Panc1 (cell line): ENCODE measurements at regions of chr11 and their contacts with region 1.

Region 1: GRCh38 chr11:78798660-78799059 is 224.0 kb upstream of the NARS2 start:
- DNase-seq: peak; percentile 30
- ATAC-seq: peak; percentile 81
- H3K4me3 ChIP-seq: no peak overlapping the region
- H3K27ac ChIP-seq: no peak overlapping the region
- H3K4me1 ChIP-seq: peaks cover 2% of the 10 kb centered on the region; the same call in 1 of the 2 replicates
- H3K27me3 ChIP-seq: no peaks in the 10 kb centered on the region
- CTCF ChIP-seq: peak; percentile 91

Region 2: DNA sequence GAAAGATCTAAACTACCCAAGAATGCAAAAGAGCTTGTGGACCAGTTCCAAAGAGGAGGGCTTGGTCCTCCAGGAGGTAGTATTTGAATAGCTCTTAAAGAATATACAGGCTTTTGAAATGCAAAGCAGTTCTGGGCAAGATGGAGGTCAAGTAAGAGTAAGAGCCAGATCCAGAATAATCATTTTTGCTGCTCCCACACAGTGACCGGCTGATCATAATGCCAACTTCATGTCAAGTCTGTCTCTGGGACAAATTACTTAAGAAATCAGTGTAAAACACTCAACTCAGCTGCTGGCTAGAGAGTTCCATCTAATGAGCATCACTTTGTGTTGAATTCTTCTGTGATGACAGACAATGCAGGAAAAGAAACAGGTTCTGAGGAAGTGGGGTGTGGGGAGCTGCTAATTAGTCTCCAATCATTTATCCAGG is 26.9 kb after region 1 on chr11:
- CTCF ChIA-PET with region 1: no interaction called
- POLR2A ChIA-PET with region 1: interaction called, 13 read pairs
- in situ Hi-C with region 1: no loop called
- intact Hi-C with region 1: no loop called
- DNase-seq: no peak
- ATAC-seq: no peak
- H3K4me3 ChIP-seq: no peak overlapping the region
- H3K27ac ChIP-seq: no peak overlapping the region
- H3K4me1 ChIP-seq: no peaks in the 10 kb centered on the region
- H3K27me3 ChIP-seq: no peaks in the 10 kb centered on the region
- CTCF ChIP-seq: no peak

Region 3: GRCh38 chr11:78851878-78852586 is 53.4 kb after region 1 on chr11:
- CTCF ChIA-PET with region 1: no interaction called
- POLR2A ChIA-PET with region 1: no interaction called
- in situ Hi-C with region 1: no loop called
- intact Hi-C with region 1: no loop called
- DNase-seq: no peak
- ATAC-seq: no peak
- H3K4me3 ChIP-seq: no peak overlapping the region
- H3K27ac ChIP-seq: no peak overlapping the region
- H3K4me1 ChIP-seq: no peaks in the 10 kb centered on the region
- H3K27me3 ChIP-seq: peaks cover 2% of the 10 kb centered on the region
- CTCF ChIP-seq: no peak

Region 4: DNA sequence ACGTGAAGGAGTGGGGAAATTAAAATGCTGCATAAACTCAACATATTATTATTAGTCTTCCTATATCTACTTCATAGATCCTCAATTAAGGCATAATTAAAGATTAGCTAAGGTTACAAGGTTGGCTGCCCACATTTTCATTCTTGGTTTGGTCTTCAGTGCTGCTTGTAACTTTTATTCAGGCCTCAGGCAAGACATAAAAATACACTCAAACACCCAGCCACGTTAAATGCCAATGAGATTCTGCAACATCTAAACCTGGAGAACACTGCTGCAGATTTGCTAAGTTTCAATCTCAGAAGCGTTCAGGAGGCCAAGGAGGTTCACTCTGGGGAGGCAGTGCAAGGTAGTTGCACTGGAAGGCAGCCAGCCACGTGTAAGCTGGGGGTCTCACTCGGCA is 134.7 kb after region 1 on chr11:
- CTCF ChIA-PET with region 1: no interaction called
- POLR2A ChIA-PET with region 1: interaction called, 11 read pairs
- in situ Hi-C with region 1: no loop called
- intact Hi-C with region 1: no loop called
- DNase-seq: no peak
- ATAC-seq: no peak
- H3K4me3 ChIP-seq: no peak overlapping the region
- H3K27ac ChIP-seq: no peak overlapping the region
- H3K4me1 ChIP-seq: no peaks in the 10 kb centered on the region
- H3K27me3 ChIP-seq: peaks cover 5% of the 10 kb centered on the region; the same call in 1 of the 2 replicates
- CTCF ChIP-seq: no peak

Region 5: GRCh38 chr11:78961247-78961646 is 162.6 kb after region 1 on chr11:
- CTCF ChIA-PET with region 1: interaction called, 3 read pairs
- POLR2A ChIA-PET with region 1: no interaction called
- in situ Hi-C with region 1: no loop called
- intact Hi-C with region 1: loop called (anchors 2 kb)
- DNase-seq: no peak
- ATAC-seq: peak; percentile 85
- H3K4me3 ChIP-seq: no peak overlapping the region; a peak in 1 of 4 replicates
- H3K27ac ChIP-seq: no peak overlapping the region
- H3K4me1 ChIP-seq: no peaks in the 10 kb centered on the region
- H3K27me3 ChIP-seq: no peaks in the 10 kb centered on the region
- CTCF ChIP-seq: peak; percentile 77

Region 6: DNA sequence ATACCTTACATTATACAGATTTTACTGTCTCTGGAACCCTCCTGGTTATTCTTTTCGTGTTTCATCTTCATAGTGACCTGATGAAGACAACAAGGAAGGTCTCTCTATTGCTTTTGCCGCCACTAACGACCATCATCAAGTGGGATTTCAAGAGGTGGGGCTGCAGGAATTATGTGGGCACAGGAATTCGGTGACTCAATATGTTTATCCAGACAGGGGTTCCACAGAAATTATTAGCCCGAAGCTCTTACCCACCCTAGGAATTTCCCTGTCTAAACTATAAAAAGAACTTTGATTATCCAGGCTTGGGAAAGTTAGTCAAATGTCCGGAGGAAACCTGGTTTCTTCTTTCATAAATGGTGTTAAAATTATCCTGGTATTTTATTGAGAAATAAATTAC is 1209.0 kb after region 1 on chr11:
- CTCF ChIA-PET with region 1: no interaction called
- POLR2A ChIA-PET with region 1: no interaction called
- in situ Hi-C with region 1: no loop called
- intact Hi-C with region 1: no loop called
- DNase-seq: no peak
- ATAC-seq: no peak
- H3K4me3 ChIP-seq: no peak overlapping the region
- H3K27ac ChIP-seq: no peak overlapping the region
- H3K4me1 ChIP-seq: peaks cover 2% of the 10 kb centered on the region; the same call in 1 of the 2 replicates
- H3K27me3 ChIP-seq: no peaks in the 10 kb centered on the region
- CTCF ChIP-seq: no peak